Activated B cell treated with CpG ODN at 0.5 μM for 24 hours (primary cell): ENCODE measurements at regions of chr3 and their contacts with region 1.

Region 1: DNA sequence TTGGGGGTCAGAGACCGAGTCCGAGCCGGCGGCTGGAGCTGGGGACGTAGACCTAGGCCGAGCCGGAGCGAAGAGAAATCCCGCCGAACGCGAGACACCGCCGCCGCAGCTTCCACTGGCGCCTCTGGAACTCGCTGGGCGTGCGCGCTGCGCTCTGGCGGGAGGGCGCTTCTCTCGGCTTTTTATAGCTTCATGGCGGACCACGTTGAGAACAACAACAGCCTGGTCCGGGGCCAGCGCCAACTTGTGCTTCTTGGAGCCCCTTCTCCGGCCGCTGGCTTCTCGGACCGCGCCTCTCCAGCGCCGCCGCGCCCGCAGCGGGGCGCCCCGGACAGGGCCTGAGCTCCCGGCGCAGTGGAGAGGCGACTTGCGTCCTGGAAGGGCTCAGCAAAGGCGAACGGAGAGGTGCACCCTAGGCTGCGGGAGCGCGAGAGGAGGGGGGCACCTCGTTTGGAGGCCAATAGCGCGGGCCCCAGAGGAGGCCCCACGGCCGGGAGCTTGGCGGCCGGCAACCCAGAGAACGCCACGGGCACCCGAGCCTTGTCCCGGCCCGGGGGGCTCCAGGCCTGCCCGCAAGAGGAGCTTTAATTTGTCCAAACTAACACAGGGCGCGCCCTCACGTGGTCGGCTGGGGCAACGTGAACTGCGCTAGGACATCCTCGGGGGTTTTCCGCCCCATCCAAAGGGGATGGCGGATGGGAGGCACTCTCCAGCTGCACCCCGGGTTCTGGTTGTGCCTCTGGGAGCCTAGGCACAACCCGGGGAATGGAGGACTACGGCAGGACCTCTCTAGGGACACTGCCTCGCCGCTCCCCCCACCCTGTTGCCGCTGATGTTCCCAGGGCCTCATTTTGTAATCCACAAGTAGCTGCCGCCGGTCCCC is 37.7 kb downstream of the HMCES start:
- DNase-seq: peak; percentile 69
- ATAC-seq: peak; percentile 38
- H3K4me3 Mint-ChIP-seq: peak overlapping the region; percentile 76
- H3K27ac Mint-ChIP-seq: no peak overlapping the region
- H3K4me1 Mint-ChIP-seq: peaks cover 24% of the 10 kb centered on the region
- H3K27me3 Mint-ChIP-seq: peaks cover 17% of the 10 kb centered on the region
- CTCF ChIP-seq: no peak

Region 2: DNA sequence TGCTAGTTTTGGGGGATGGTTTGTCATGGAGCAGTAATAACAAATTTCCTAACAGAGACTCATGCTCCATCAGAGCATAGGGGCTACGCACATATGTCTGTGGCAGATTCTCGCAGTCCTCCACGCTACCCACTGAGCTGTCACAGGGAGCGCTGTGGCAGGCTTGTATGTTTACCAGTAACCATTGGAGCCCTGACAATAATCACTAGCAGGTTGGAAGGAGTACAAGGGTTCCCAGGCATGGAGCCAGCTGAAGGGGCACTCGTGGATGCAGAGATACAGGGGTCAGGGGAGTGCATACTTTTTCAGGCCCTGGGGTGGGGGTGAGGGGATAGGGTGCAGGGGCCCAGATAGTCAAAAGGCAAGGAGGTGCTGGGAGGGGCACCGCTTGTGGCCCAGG is 263.7 kb before region 1 on chr3:
- CTCF ChIA-PET with region 1: interaction called, 15 read pairs
- POLR2A ChIA-PET with region 1: interaction called, 14 read pairs
- intact Hi-C with region 1: loop called (anchors 5 kb)
- DNase-seq: no peak
- ATAC-seq: no peak
- H3K4me3 Mint-ChIP-seq: no peak overlapping the region
- H3K27ac Mint-ChIP-seq: no peak overlapping the region
- H3K4me1 Mint-ChIP-seq: peaks cover 6% of the 10 kb centered on the region
- H3K27me3 Mint-ChIP-seq: peaks cover 23% of the 10 kb centered on the region
- CTCF ChIP-seq: no peak

Region 3: GRCh38 chr3:129183569-129184395 is 132.6 kb before region 1 on chr3 and contains the start of gene CNBP:
- CTCF ChIA-PET with region 1: no interaction called
- POLR2A ChIA-PET with region 1: interaction called, 9 read pairs
- intact Hi-C with region 1: loop called (anchors 2 kb)
- DNase-seq: peak; percentile 92
- ATAC-seq: peak; percentile 95
- H3K4me3 Mint-ChIP-seq: peak within 1 kb of the TSS; percentile 95
- H3K27ac Mint-ChIP-seq: peak within 1 kb of the TSS; percentile 95
- H3K4me1 Mint-ChIP-seq: peaks cover 50% of the 10 kb centered on the region
- H3K27me3 Mint-ChIP-seq: no peaks in the 10 kb centered on the region
- CTCF ChIP-seq: no peak
- total RNA-seq, gene CNBP: 281 and 303 TPM in 2 replicates

Region 4: DNA sequence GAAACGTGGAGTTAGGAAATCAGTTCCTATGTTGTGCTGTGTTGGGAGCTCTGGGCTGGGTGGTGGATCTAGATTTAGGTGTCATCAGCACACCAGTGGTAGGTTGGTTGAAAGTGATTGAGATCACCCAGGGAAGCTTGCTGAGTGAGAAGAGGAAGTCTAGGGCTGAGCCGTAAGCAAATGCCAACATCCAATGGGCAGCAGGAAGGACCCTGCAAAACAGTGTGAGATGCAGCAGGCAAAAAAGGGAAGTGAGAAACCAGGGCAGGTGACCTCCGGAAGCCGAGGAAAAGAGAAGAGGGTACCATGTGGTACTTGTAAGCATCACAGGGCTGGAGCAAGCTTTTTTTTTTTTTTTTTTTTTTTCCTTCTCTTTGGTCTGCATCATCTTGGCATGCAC is 82.8 kb before region 1 on chr3:
- CTCF ChIA-PET with region 1: no interaction called
- POLR2A ChIA-PET with region 1: interaction called, 18 read pairs
- intact Hi-C with region 1: no loop called
- DNase-seq: peak; percentile 53
- ATAC-seq: peak; percentile 93
- H3K4me3 Mint-ChIP-seq: peak overlapping the region; percentile 50
- H3K27ac Mint-ChIP-seq: peak overlapping the region; percentile 88
- H3K4me1 Mint-ChIP-seq: peaks cover 52% of the 10 kb centered on the region
- H3K27me3 Mint-ChIP-seq: no peaks in the 10 kb centered on the region
- CTCF ChIP-seq: no peak

Region 5: GRCh38 chr3:129271674-129272073 is 44.7 kb before region 1 on chr3:
- CTCF ChIA-PET with region 1: interaction called, 21 read pairs
- POLR2A ChIA-PET with region 1: interaction called, 172 read pairs
- intact Hi-C with region 1: loop called (anchors 1 kb)
- DNase-seq: no peak
- ATAC-seq: no peak
- H3K4me3 Mint-ChIP-seq: no peak overlapping the region
- H3K27ac Mint-ChIP-seq: no peak overlapping the region
- H3K4me1 Mint-ChIP-seq: peaks cover 22% of the 10 kb centered on the region
- H3K27me3 Mint-ChIP-seq: no peaks in the 10 kb centered on the region
- CTCF ChIP-seq: no peak

Region 6: DNA sequence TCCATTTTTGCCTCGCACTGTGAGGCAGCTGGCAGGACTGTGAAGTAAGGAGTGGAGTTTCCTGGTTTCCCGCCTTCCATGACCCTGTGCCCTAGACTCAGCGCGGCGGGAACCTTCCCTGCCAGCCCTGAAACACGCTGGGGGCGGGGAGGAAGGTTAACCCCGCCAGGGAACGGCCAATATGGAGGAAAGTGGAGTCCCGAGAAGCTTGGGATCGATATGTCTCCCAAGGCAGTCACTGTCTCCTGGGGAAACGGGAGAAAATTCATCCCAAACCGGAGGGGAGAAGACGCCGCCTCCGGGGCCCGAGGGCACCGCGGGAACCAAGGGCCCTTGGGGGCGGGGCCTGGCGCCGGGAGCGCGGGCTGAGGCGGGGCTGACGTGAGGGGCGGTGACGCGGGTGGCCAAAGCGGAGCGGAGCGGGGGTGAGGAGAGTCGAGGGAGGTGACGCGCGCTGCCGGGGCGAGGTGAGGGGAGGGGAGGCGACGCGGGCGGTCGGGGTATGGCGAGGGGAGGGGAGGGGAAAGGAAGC is 37.9 kb before region 1 on chr3 and contains the start of gene HMCES:
- CTCF ChIA-PET with region 1: interaction called, 32 read pairs
- POLR2A ChIA-PET with region 1: interaction called, 172 read pairs
- intact Hi-C with region 1: loop called (anchors 1 kb)
- DNase-seq: peak; percentile 91
- ATAC-seq: peak; percentile 62
- H3K4me3 Mint-ChIP-seq: peak within 1 kb of the TSS; percentile 91
- H3K27ac Mint-ChIP-seq: peak within 1 kb of the TSS; percentile 86
- H3K4me1 Mint-ChIP-seq: peaks cover 80% of the 10 kb centered on the region
- H3K27me3 Mint-ChIP-seq: no peaks in the 10 kb centered on the region
- CTCF ChIP-seq: no peak
- total RNA-seq, gene HMCES: 31.7 and 37.2 TPM in 2 replicates

Region 7: GRCh38 chr3:129305592-129306091 is 10.7 kb before region 1 on chr3:
- CTCF ChIA-PET with region 1: interaction called, 14 read pairs
- POLR2A ChIA-PET with region 1: interaction called, 18 read pairs
- intact Hi-C with region 1: loop called (anchors 1 kb)
- DNase-seq: peak; percentile 46
- ATAC-seq: peak; percentile 87
- H3K4me3 Mint-ChIP-seq: peak overlapping the region; percentile 78
- H3K27ac Mint-ChIP-seq: peak overlapping the region; percentile 59
- H3K4me1 Mint-ChIP-seq: peaks cover 27% of the 10 kb centered on the region
- H3K27me3 Mint-ChIP-seq: no peaks in the 10 kb centered on the region
- CTCF ChIP-seq: no peak